Heart left ventricle (tissue), 16 donors: ENCODE measurements at regions of chr7 and their contacts with region 1.

Region 1: DNA sequence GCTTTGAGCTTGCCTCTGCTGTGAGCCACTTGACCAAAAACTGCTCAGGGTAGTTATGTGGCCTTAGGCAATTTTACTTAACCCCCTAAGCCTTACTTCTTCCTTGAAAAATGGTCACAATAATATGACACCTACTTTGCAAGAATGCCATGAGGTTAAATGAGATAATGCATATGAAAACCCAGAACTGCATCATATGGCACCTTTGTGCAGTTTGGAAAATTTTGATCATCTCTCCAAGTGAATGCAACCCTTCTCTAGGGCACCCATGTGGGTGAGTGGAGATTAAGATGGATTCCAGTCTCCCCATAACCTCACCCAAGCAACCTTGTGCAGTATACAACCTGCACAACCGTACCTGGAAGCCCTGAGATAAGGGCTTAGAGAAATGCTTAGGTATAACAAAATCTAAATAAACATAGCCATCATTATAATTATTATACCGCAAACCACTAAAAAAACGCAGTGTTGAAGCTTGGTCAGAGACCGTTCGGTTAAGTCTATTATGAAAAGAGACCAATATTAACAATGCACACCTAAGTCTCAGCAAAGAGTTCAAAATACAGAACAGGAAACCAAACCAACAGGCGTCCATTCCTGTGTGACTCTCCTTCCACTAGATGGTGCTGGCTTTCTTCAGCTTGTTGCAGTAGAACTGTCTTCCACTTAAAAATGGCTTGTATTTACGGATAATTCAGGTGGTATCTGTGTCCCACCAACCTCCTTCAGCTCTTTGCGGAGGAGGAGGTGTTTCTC is 21.0 kb upstream of the ASB15 start:
- DNase-seq: no peak
- ATAC-seq: peak; percentile 65 to 84 (median 80)
- H3K4me3 ChIP-seq: no peak overlapping the region
- H3K27ac ChIP-seq: peak overlapping the region in 2 of 12 donors; percentile 2 to 17
- H3K4me1 ChIP-seq: no peaks in the 10 kb centered on the region
- H3K27me3 ChIP-seq: no peaks in the 10 kb centered on the region
- CTCF ChIP-seq: peak; percentile 38 to 74 (median 64)
- POLR2A ChIP-seq: no peak

Region 2: GRCh38 chr7:123437447-123437995 is 143.1 kb before region 1 on chr7:
- intact Hi-C with region 1: no loop called
- DNase-seq: no peak
- ATAC-seq: no peak
- H3K4me3 ChIP-seq: no peak overlapping the region
- H3K27ac ChIP-seq: no peak overlapping the region
- H3K4me1 ChIP-seq: no peaks in the 10 kb centered on the region
- H3K27me3 ChIP-seq: no peaks in the 10 kb centered on the region
- CTCF ChIP-seq: no peak
- POLR2A ChIP-seq: no peak

Region 3: GRCh38 chr7:123682690-123683089 is 102.1 kb after region 1 on chr7:
- intact Hi-C with region 1: loop called in 2 of 10 experiments (anchors 10 kb)
- DNase-seq: no peak
- ATAC-seq: peak in 2 of 4 donors; percentile 24 to 40
- H3K4me3 ChIP-seq: no peak overlapping the region
- H3K27ac ChIP-seq: peak overlapping the region in 3 of 12 donors; percentile 54 to 73 (median 61)
- H3K4me1 ChIP-seq: peaks cover 0 to 41% (median 16%) of the 10 kb centered on the region in 12 donors
- H3K27me3 ChIP-seq: no peaks in the 10 kb centered on the region
- CTCF ChIP-seq: peak; percentile 31 to 70 (median 57)
- POLR2A ChIP-seq: no peak